CD4-positive, alpha-beta T cell (primary cell): ENCODE measurements at regions of chr3 and their contacts with region 1.

Region 1: GRCh38 chr3:50611464-50612233 is at the start of gene CISH:
- DNase-seq: peak; percentile 83 to 97 (median 90)
- ATAC-seq: peak; percentile 68
- H3K4me3 ChIP-seq: peak within 1 kb of the TSS; percentile 87
- H3K4me3 Mint-ChIP-seq: peak within 1 kb of the TSS; percentile 96
- H3K27ac ChIP-seq: peak within 1 kb of the TSS; percentile 79 to 89
- H3K27ac Mint-ChIP-seq: peak within 1 kb of the TSS; percentile 93
- H3K4me1 ChIP-seq: peaks cover 88% of the 10 kb centered on the region
- H3K4me1 Mint-ChIP-seq: peaks cover 77% of the 10 kb centered on the region
- H3K27me3 ChIP-seq: no peaks in the 10 kb centered on the region
- H3K27me3 Mint-ChIP-seq: no peaks in the 10 kb centered on the region
- CTCF ChIP-seq: peak; percentile 34
- total RNA-seq, gene CISH: 3.5 to 3.7 TPM

Region 2: GRCh38 chr3:50436114-50436674 is 175.5 kb before region 1 on chr3:
- CTCF ChIA-PET with region 1: no interaction called
- POLR2A ChIA-PET with region 1: no interaction called
- intact Hi-C with region 1: loop called (anchors 2 to 5 kb)
- DNase-seq: peak; percentile 58 to 82 (median 71)
- ATAC-seq: peak; percentile 97
- H3K4me3 ChIP-seq: no peak overlapping the region
- H3K4me3 Mint-ChIP-seq: no peak overlapping the region
- H3K27ac ChIP-seq: no peak overlapping the region
- H3K27ac Mint-ChIP-seq: no peak overlapping the region
- H3K4me1 ChIP-seq: peaks cover 8% of the 10 kb centered on the region
- H3K4me1 Mint-ChIP-seq: no peaks in the 10 kb centered on the region
- H3K27me3 ChIP-seq: no peaks in the 10 kb centered on the region
- H3K27me3 Mint-ChIP-seq: peaks cover 4% of the 10 kb centered on the region
- CTCF ChIP-seq: peak; percentile 82

Region 3: GRCh38 chr3:50550079-50550741 is 61.4 kb before region 1 on chr3:
- CTCF ChIA-PET with region 1: no interaction called
- POLR2A ChIA-PET with region 1: no interaction called
- intact Hi-C with region 1: no loop called
- DNase-seq: peak; percentile 37 to 75 (median 56)
- ATAC-seq: peak; percentile 83
- H3K4me3 ChIP-seq: no peak overlapping the region
- H3K4me3 Mint-ChIP-seq: no peak overlapping the region
- H3K27ac ChIP-seq: no peak overlapping the region
- H3K27ac Mint-ChIP-seq: no peak overlapping the region
- H3K4me1 ChIP-seq: peaks cover 5% of the 10 kb centered on the region
- H3K4me1 Mint-ChIP-seq: no peaks in the 10 kb centered on the region
- H3K27me3 ChIP-seq: no peaks in the 10 kb centered on the region
- H3K27me3 Mint-ChIP-seq: no peaks in the 10 kb centered on the region
- CTCF ChIP-seq: peak; percentile 85

Region 4: GRCh38 chr3:50600841-50601591 is 10.6 kb before region 1 on chr3:
- CTCF ChIA-PET with region 1: interaction called, 7 read pairs
- POLR2A ChIA-PET with region 1: interaction called, 60 read pairs
- intact Hi-C with region 1: no loop called
- DNase-seq: peak; percentile 41 to 88 (median 60)
- ATAC-seq: peak; percentile 71
- H3K4me3 ChIP-seq: peak overlapping the region; percentile 34
- H3K4me3 Mint-ChIP-seq: peak overlapping the region; percentile 63
- H3K27ac ChIP-seq: peak overlapping the region; percentile 73 to 86
- H3K27ac Mint-ChIP-seq: peak overlapping the region; percentile 93
- H3K4me1 ChIP-seq: peaks cover 80% of the 10 kb centered on the region
- H3K4me1 Mint-ChIP-seq: peaks cover 64% of the 10 kb centered on the region
- H3K27me3 ChIP-seq: no peaks in the 10 kb centered on the region
- H3K27me3 Mint-ChIP-seq: no peaks in the 10 kb centered on the region
- CTCF ChIP-seq: no peak

Region 5: GRCh38 chr3:50759015-50759414 is 147.4 kb after region 1 on chr3:
- CTCF ChIA-PET with region 1: no interaction called
- POLR2A ChIA-PET with region 1: no interaction called
- intact Hi-C with region 1: no loop called
- DNase-seq: no peak
- ATAC-seq: no peak
- H3K4me3 ChIP-seq: no peak overlapping the region
- H3K4me3 Mint-ChIP-seq: no peak overlapping the region
- H3K27ac ChIP-seq: no peak overlapping the region
- H3K27ac Mint-ChIP-seq: no peak overlapping the region
- H3K4me1 ChIP-seq: no peaks in the 10 kb centered on the region
- H3K4me1 Mint-ChIP-seq: no peaks in the 10 kb centered on the region
- H3K27me3 ChIP-seq: no peaks in the 10 kb centered on the region
- H3K27me3 Mint-ChIP-seq: peaks cover 6% of the 10 kb centered on the region
- CTCF ChIP-seq: no peak

Region 6: GRCh38 chr3:50971487-50971924 is 359.9 kb after region 1 on chr3:
- CTCF ChIA-PET with region 1: interaction called, 10 read pairs
- POLR2A ChIA-PET with region 1: no interaction called
- intact Hi-C with region 1: loop called (anchors 1 to 2 kb)
- DNase-seq: peak; percentile 20 to 85 (median 47)
- ATAC-seq: peak; percentile 96
- H3K4me3 ChIP-seq: no peak overlapping the region
- H3K4me3 Mint-ChIP-seq: no peak overlapping the region
- H3K27ac ChIP-seq: no peak overlapping the region
- H3K27ac Mint-ChIP-seq: no peak overlapping the region
- H3K4me1 ChIP-seq: peaks cover 12% of the 10 kb centered on the region
- H3K4me1 Mint-ChIP-seq: peaks cover 17% of the 10 kb centered on the region
- H3K27me3 ChIP-seq: no peaks in the 10 kb centered on the region
- H3K27me3 Mint-ChIP-seq: no peaks in the 10 kb centered on the region
- CTCF ChIP-seq: peak; percentile 95

Region 7: DNA sequence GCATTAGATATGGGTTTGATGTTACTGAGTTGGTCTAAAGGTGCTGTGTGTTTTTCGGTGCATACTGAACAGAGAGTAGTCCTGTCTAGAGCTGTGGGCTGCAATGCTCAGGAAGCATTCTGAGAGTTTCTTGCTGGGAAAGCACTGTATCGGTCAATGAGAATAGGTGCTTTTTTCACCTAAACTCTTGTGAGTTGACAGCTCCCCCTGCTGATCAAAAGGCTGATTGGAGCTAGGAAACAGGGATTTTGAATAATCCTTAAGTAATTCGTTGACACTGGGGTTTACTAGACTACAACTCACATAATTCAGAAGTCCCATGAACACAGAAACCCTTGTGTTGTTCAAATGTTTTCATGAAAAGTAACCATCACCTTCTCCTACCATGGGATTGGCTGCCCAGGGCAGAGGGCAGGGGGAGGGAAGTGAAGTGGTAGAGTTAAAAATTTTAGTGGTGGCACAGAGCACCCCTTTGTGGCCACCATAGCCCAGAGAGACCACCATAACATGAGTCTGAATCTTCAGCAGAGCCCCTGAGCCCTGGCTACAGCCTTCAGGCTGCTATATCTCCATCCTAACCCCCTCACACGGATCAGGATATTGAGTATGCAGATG is 760.4 kb after region 1 on chr3:
- CTCF ChIA-PET with region 1: interaction called, 19 read pairs
- POLR2A ChIA-PET with region 1: interaction called, 3 read pairs
- intact Hi-C with region 1: loop called in 1 of 2 experiments (anchors 1 kb)
- DNase-seq: peak in 11 of 14 experiments; percentile 27 to 76 (median 42)
- ATAC-seq: peak; percentile 49
- H3K4me3 ChIP-seq: no peak overlapping the region
- H3K4me3 Mint-ChIP-seq: no peak overlapping the region
- H3K27ac ChIP-seq: no peak overlapping the region
- H3K27ac Mint-ChIP-seq: no peak overlapping the region
- H3K4me1 ChIP-seq: no peaks in the 10 kb centered on the region
- H3K4me1 Mint-ChIP-seq: no peaks in the 10 kb centered on the region
- H3K27me3 ChIP-seq: peaks cover 0 to 3% of the 10 kb centered on the region in 2 experiments
- H3K27me3 Mint-ChIP-seq: no peaks in the 10 kb centered on the region
- CTCF ChIP-seq: peak; percentile 65

Region 8: GRCh38 chr3:51498876-51499738 is 887.5 kb after region 1 on chr3:
- CTCF ChIA-PET with region 1: interaction called, 4 read pairs
- POLR2A ChIA-PET with region 1: interaction called, 6 read pairs
- intact Hi-C with region 1: loop called (anchors 2 to 5 kb)
- DNase-seq: peak; percentile 58 to 91 (median 74)
- ATAC-seq: peak; percentile 52
- H3K4me3 ChIP-seq: peak overlapping the region; percentile 96
- H3K4me3 Mint-ChIP-seq: peak overlapping the region; percentile 94
- H3K27ac ChIP-seq: peak overlapping the region; percentile 91 to 96
- H3K27ac Mint-ChIP-seq: peak overlapping the region; percentile 86
- H3K4me1 ChIP-seq: peaks cover 34% of the 10 kb centered on the region
- H3K4me1 Mint-ChIP-seq: peaks cover 29% of the 10 kb centered on the region
- H3K27me3 ChIP-seq: no peaks in the 10 kb centered on the region
- H3K27me3 Mint-ChIP-seq: no peaks in the 10 kb centered on the region
- CTCF ChIP-seq: no peak